ENCODE measurements at regions of chr3 and their contacts with region 1.

Region 1: GRCh38 chr3:72847751-72848702 is at the start of gene SHQ1:
- DNase-seq: peak; percentile 86 to 98 (median 92)
- ATAC-seq: peak; percentile 93
- H3K4me3 ChIP-seq: peak within 1 kb of the TSS; percentile 93
- H3K4me3 Mint-ChIP-seq: peak within 1 kb of the TSS; percentile 97
- H3K27ac ChIP-seq: peak within 1 kb of the TSS in 1 of 2 donors; percentile 55
- H3K27ac Mint-ChIP-seq: peak within 1 kb of the TSS; percentile 88
- H3K4me1 ChIP-seq: peaks cover 24% of the 10 kb centered on the region
- H3K4me1 Mint-ChIP-seq: peaks cover 64% of the 10 kb centered on the region
- H3K27me3 ChIP-seq: no peaks in the 10 kb centered on the region
- H3K27me3 Mint-ChIP-seq: no peaks in the 10 kb centered on the region
- CTCF ChIP-seq: no peak
- total RNA-seq, gene SHQ1: 9.4 to 13.1 TPM

Region 2: GRCh38 chr3:71725279-71725991 is 1122.6 kb before region 1 on chr3 and contains the start of gene EIF4E3:
- CTCF ChIA-PET with region 1: no interaction called
- POLR2A ChIA-PET with region 1: no interaction called
- intact Hi-C with region 1: loop called in 1 of 2 experiments (anchors 5 kb)
- DNase-seq: peak in 8 of 14 experiments; percentile 19 to 81 (median 53)
- ATAC-seq: peak; percentile 21
- H3K4me3 ChIP-seq: peak within 1 kb of the TSS; percentile 90
- H3K4me3 Mint-ChIP-seq: peak within 1 kb of the TSS; percentile 89
- H3K27ac ChIP-seq: peak within 1 kb of the TSS; percentile 63 to 84
- H3K27ac Mint-ChIP-seq: peak within 1 kb of the TSS; percentile 91
- H3K4me1 ChIP-seq: peaks cover 62% of the 10 kb centered on the region
- H3K4me1 Mint-ChIP-seq: peaks cover 77% of the 10 kb centered on the region
- H3K27me3 ChIP-seq: no peaks in the 10 kb centered on the region
- H3K27me3 Mint-ChIP-seq: no peaks in the 10 kb centered on the region
- CTCF ChIP-seq: no peak
- total RNA-seq, gene EIF4E3: 48.2 to 50.4 TPM

Region 3: DNA sequence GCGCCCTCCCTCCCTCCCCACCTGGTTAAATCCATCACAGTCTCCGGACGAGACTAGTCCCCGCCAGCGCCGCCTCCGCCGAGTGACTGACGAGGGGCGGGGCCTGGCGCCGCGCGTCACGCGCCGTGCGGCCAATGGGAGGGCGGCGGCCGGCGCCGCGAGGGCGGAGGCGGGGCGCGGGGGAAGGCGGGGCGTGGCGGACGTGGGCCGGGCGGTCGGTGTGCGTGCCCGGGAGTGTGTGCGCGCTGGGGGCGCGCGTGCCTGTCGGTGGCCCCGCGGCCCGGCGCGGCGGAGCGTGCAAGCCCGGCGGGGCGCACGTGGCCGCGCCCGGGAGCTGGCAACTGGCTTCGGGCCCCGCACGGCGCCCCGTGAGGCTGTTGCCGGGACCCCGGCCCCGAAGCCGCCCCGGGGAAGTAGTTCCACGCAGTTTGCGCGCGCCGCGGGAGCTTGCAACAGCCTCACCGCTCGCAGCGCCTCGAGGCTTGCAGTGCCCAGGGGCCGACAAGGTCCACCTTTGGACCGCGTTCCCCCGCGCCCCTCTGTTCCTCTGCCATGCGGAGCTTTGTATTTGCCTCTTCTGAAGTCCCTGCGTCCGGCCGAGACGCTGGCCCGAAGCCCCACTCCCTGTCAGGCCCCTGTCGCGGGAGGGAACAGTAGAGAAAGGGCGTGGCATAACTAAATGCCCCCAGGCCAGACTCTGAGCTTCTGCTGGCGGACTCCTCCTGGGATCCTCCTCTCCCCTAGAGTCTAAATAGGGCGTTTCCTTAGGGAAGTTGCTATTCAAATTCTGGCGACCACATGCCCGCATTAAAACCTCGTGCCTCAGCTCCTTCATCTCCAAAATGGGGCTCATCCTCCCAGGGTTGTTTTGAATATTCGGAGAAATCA is 400.7 kb before region 1 on chr3:
- CTCF ChIA-PET with region 1: no interaction called
- POLR2A ChIA-PET with region 1: no interaction called
- intact Hi-C with region 1: loop called in 1 of 2 experiments (anchors 5 kb)
- DNase-seq: peak; percentile 86 to 98 (median 93)
- ATAC-seq: peak; percentile 89
- H3K4me3 ChIP-seq: peak overlapping the region; percentile 69
- H3K4me3 Mint-ChIP-seq: peak overlapping the region; percentile 85
- H3K27ac ChIP-seq: peak overlapping the region in 1 of 2 donors; percentile 55
- H3K27ac Mint-ChIP-seq: peak overlapping the region; percentile 74
- H3K4me1 ChIP-seq: peaks cover 16% of the 10 kb centered on the region
- H3K4me1 Mint-ChIP-seq: peaks cover 43% of the 10 kb centered on the region
- H3K27me3 ChIP-seq: no peaks in the 10 kb centered on the region
- H3K27me3 Mint-ChIP-seq: no peaks in the 10 kb centered on the region
- CTCF ChIP-seq: peak; percentile 13

Region 4: DNA sequence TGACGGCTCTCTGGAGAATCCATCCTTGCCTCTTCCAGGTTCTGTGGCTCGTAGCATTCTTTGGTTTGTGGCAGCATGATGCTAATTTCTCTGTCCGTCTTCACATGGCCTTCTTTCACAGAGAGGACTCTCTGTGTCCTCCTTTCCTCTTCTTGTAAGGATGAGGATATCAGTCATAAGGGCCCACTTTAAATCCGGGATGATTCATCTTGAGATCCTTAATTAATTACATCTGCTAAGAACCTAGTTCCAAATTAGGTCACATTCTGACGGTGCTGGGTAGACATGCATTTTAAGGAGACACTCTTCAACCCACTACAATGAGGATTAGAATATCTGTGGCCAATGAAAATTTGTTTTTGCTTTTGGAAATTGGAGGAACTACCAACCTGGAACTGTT is 24.2 kb after region 1 on chr3:
- CTCF ChIA-PET with region 1: no interaction called
- POLR2A ChIA-PET with region 1: no interaction called
- intact Hi-C with region 1: no loop called
- DNase-seq: no peak
- ATAC-seq: no peak
- H3K4me3 ChIP-seq: no peak overlapping the region
- H3K4me3 Mint-ChIP-seq: no peak overlapping the region
- H3K27ac ChIP-seq: no peak overlapping the region
- H3K27ac Mint-ChIP-seq: no peak overlapping the region
- H3K4me1 ChIP-seq: no peaks in the 10 kb centered on the region
- H3K4me1 Mint-ChIP-seq: no peaks in the 10 kb centered on the region
- H3K27me3 ChIP-seq: peaks cover 3 to 5% of the 10 kb centered on the region in 2 experiments
- H3K27me3 Mint-ChIP-seq: peaks cover 6% of the 10 kb centered on the region
- CTCF ChIP-seq: no peak

Region 5: GRCh38 chr3:72938471-72939265 is 90.6 kb after region 1 on chr3:
- CTCF ChIA-PET with region 1: interaction called, 3 read pairs
- POLR2A ChIA-PET with region 1: no interaction called
- intact Hi-C with region 1: loop called (anchors 1 to 5 kb)
- DNase-seq: peak in 5 of 14 experiments; percentile 25 to 75 (median 65)
- ATAC-seq: peak; percentile 100
- H3K4me3 ChIP-seq: no peak overlapping the region
- H3K4me3 Mint-ChIP-seq: no peak overlapping the region
- H3K27ac ChIP-seq: no peak overlapping the region
- H3K27ac Mint-ChIP-seq: no peak overlapping the region
- H3K4me1 ChIP-seq: no peaks in the 10 kb centered on the region
- H3K4me1 Mint-ChIP-seq: no peaks in the 10 kb centered on the region
- H3K27me3 ChIP-seq: no peaks in the 10 kb centered on the region
- H3K27me3 Mint-ChIP-seq: no peaks in the 10 kb centered on the region
- CTCF ChIP-seq: peak; percentile 77

Region 6: GRCh38 chr3:73056014-73056844 is 208.2 kb after region 1 on chr3:
- CTCF ChIA-PET with region 1: interaction called, 22 read pairs
- POLR2A ChIA-PET with region 1: interaction called, 10 read pairs
- intact Hi-C with region 1: loop called in 1 of 2 experiments (anchors 1 kb)
- DNase-seq: peak in 3 of 14 experiments; percentile 40 to 68 (median 44)
- ATAC-seq: peak; percentile 48
- H3K4me3 ChIP-seq: no peak overlapping the region
- H3K4me3 Mint-ChIP-seq: no peak overlapping the region
- H3K27ac ChIP-seq: no peak overlapping the region
- H3K27ac Mint-ChIP-seq: peak overlapping the region; percentile 18
- H3K4me1 ChIP-seq: no peaks in the 10 kb centered on the region
- H3K4me1 Mint-ChIP-seq: peaks cover 28% of the 10 kb centered on the region
- H3K27me3 ChIP-seq: no peaks in the 10 kb centered on the region
- H3K27me3 Mint-ChIP-seq: no peaks in the 10 kb centered on the region
- CTCF ChIP-seq: peak; percentile 79

Region 7: DNA sequence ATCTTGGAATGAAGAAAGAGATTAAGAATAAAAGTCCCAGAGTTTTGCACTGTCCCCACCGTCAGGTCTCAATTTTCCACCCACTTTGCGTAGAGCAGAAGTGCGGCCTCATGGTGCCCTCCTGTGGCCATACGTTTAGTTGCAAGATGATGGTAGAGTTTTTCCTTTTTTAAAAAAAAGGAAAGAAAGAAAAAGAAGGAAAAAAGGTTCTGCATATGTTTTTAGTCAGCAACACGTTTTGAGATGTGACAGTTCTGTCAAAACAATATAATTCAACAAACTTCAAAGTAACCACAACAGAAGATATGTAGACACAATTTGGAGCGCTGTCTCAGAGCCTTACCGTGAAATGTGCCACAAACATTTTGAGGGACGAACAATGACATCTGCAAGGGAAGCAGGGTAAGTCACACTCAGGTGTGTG is 238.1 kb after region 1 on chr3:
- CTCF ChIA-PET with region 1: interaction called, 10 read pairs
- POLR2A ChIA-PET with region 1: interaction called, 3 read pairs
- intact Hi-C with region 1: loop called (anchors 1 to 5 kb)
- DNase-seq: peak; percentile 20 to 73 (median 37)
- ATAC-seq: peak; percentile 78
- H3K4me3 ChIP-seq: no peak overlapping the region
- H3K4me3 Mint-ChIP-seq: peak overlapping the region; percentile 22
- H3K27ac ChIP-seq: no peak overlapping the region
- H3K27ac Mint-ChIP-seq: no peak overlapping the region
- H3K4me1 ChIP-seq: peaks cover 4% of the 10 kb centered on the region
- H3K4me1 Mint-ChIP-seq: peaks cover 7% of the 10 kb centered on the region
- H3K27me3 ChIP-seq: no peaks in the 10 kb centered on the region
- H3K27me3 Mint-ChIP-seq: no peaks in the 10 kb centered on the region
- CTCF ChIP-seq: peak; percentile 95